A673 (cell line): ENCODE measurements at regions of chr6 and their contacts with region 1.

Region 1: GRCh38 chr6:37169496-37170272 is at the start of gene PIM1:
- DNase-seq: peak; percentile 98
- H3K4me3 ChIP-seq: peak within 1 kb of the TSS; percentile 67
- H3K27ac ChIP-seq: peak within 1 kb of the TSS; percentile 83
- H3K4me1 ChIP-seq: peaks cover 8% of the 10 kb centered on the region
- H3K27me3 ChIP-seq: no peaks in the 10 kb centered on the region
- CTCF ChIP-seq: no peak
- total RNA-seq, gene PIM1: 8.9 and 10.6 TPM in 2 replicates

Region 2: GRCh38 chr6:36885461-36886401 is 284.0 kb before region 1 on chr6 and contains the start of gene C6orf89:
- CTCF ChIA-PET with region 1: no interaction called
- POLR2A ChIA-PET with region 1: no interaction called
- intact Hi-C with region 1: loop called (anchors 10 kb)
- DNase-seq: peak; percentile 99
- H3K4me3 ChIP-seq: peak within 1 kb of the TSS; percentile 72
- H3K27ac ChIP-seq: peak within 1 kb of the TSS; percentile 88
- H3K4me1 ChIP-seq: peaks cover 6% of the 10 kb centered on the region
- H3K27me3 ChIP-seq: no peaks in the 10 kb centered on the region
- CTCF ChIP-seq: peak; percentile 88
- total RNA-seq, gene C6orf89: 22.6 and 27.1 TPM in 2 replicates

Region 3: DNA sequence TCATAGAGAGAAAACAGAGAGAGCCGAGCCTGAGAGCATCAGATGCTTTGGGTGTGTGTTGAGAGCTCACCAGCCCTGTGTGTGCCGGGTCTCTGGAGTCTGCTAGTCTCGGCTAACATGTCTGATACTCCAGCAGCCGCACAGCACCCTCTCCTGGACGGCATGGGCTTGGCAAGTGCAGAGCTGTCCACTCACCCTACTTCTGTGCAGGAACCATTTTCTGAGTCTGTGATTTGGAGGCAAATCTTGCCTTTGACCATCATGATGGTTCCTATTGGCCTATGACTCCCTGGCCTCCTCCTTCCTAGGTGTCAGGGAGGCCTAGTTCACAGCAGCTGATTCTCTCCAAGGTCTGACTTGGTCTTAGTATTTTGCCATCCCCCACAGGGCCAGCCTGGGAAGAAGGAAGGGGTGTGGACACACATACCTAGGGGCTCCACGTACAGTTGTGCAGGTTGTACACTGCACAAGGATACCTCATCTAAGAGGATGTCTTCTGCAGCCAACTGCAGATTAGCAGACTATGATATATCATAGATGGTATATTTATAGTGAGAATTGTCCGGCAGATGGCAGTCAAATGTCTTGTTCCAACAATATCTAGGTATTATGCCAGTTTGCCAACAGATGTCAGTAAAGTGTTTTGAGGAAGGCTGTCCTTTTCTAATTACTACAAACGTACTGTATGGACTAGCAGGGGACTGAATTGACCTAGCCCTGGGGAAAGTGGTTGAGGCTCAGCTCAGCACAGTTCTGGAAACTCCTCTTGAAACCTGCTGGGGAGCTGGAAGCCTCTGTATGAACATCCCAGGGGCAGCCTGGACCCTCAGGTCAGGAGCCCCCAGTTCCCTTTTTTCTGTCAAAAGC is 151.3 kb before region 1 on chr6:
- CTCF ChIA-PET with region 1: interaction called, 17 read pairs
- POLR2A ChIA-PET with region 1: no interaction called
- intact Hi-C with region 1: loop called (anchors 2 kb)
- DNase-seq: peak; percentile 89
- H3K4me3 ChIP-seq: no peak overlapping the region
- H3K27ac ChIP-seq: no peak overlapping the region
- H3K4me1 ChIP-seq: no peaks in the 10 kb centered on the region
- H3K27me3 ChIP-seq: no peaks in the 10 kb centered on the region
- CTCF ChIP-seq: peak; percentile 87

Region 4: GRCh38 chr6:37051138-37052026 is 118.3 kb before region 1 on chr6:
- CTCF ChIA-PET with region 1: interaction called, 38 read pairs
- POLR2A ChIA-PET with region 1: no interaction called
- intact Hi-C with region 1: loop called (anchors 1 kb)
- DNase-seq: peak; percentile 89
- H3K4me3 ChIP-seq: no peak overlapping the region
- H3K27ac ChIP-seq: no peak overlapping the region
- H3K4me1 ChIP-seq: no peaks in the 10 kb centered on the region
- H3K27me3 ChIP-seq: no peaks in the 10 kb centered on the region
- CTCF ChIP-seq: peak; percentile 92

Region 5: GRCh38 chr6:37059344-37060206 is 110.1 kb before region 1 on chr6:
- CTCF ChIA-PET with region 1: interaction called, 5 read pairs
- POLR2A ChIA-PET with region 1: no interaction called
- intact Hi-C with region 1: loop called (anchors 1 kb)
- DNase-seq: peak; percentile 91
- H3K4me3 ChIP-seq: no peak overlapping the region
- H3K27ac ChIP-seq: peak overlapping the region; percentile 79
- H3K4me1 ChIP-seq: peaks cover 14% of the 10 kb centered on the region
- H3K27me3 ChIP-seq: no peaks in the 10 kb centered on the region
- CTCF ChIP-seq: peak; percentile 51

Region 6: GRCh38 chr6:37083243-37084138 is 86.2 kb before region 1 on chr6:
- CTCF ChIA-PET with region 1: no interaction called
- POLR2A ChIA-PET with region 1: interaction called, 12 read pairs
- intact Hi-C with region 1: no loop called
- DNase-seq: peak; percentile 52
- H3K4me3 ChIP-seq: no peak overlapping the region
- H3K27ac ChIP-seq: no peak overlapping the region
- H3K4me1 ChIP-seq: peaks cover 8% of the 10 kb centered on the region
- H3K27me3 ChIP-seq: no peaks in the 10 kb centered on the region
- CTCF ChIP-seq: no peak

Region 7: DNA sequence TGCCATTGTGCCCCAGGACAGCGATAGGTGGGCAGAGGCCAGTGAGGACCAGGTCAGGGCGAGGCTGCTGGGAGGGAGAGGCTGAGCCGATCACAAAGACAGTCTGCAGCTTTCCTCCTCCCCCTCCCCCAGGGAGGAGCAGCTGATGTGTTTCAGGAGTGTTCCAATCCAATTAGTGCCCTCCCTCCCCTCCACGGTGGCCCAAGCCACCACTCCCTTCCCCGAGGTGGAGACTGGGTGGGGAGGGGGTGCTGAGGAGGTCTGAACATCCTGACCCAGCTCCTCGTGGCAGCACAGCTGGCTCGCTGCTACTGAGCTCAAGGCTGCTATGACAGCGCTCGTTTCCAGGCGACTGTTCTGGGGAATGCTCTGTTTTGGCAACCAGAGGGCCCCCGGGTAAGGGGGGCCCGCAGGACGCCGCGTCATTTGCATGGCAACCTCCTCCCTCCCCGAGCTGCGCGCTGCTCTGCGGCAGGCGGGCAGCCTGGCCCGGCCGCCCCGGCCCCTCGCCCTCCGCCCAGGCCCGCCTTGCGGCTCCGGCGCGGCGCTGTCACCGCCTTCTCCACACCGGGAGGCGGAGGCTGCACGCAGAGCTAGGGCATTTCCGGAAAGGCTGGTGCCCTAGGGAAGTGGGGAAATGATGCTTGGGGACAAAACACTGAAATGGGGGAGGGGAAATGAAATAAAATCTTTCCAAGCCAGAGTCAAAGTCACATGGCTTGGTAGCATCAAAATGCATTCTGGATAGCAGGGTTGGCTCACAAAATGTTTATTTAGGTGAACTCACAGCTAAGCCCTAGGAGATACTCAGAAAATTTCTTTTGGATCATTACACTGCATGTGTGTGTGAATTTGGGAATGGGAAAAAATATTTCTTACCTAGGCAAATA is 67.2 kb before region 1 on chr6:
- CTCF ChIA-PET with region 1: interaction called, 3 read pairs
- POLR2A ChIA-PET with region 1: interaction called, 3 read pairs
- intact Hi-C with region 1: loop called (anchors 1 kb)
- DNase-seq: peak; percentile 94
- H3K4me3 ChIP-seq: peak overlapping the region; percentile 45
- H3K27ac ChIP-seq: peak overlapping the region; percentile 79
- H3K4me1 ChIP-seq: peaks cover 28% of the 10 kb centered on the region
- H3K27me3 ChIP-seq: no peaks in the 10 kb centered on the region
- CTCF ChIP-seq: no peak

Region 8: GRCh38 chr6:37137201-37138090 is 32.2 kb before region 1 on chr6:
- CTCF ChIA-PET with region 1: no interaction called
- POLR2A ChIA-PET with region 1: no interaction called
- intact Hi-C with region 1: no loop called
- DNase-seq: peak; percentile 89
- H3K4me3 ChIP-seq: peak overlapping the region; percentile 14
- H3K27ac ChIP-seq: peak overlapping the region; percentile 72
- H3K4me1 ChIP-seq: peaks cover 39% of the 10 kb centered on the region
- H3K27me3 ChIP-seq: no peaks in the 10 kb centered on the region
- CTCF ChIP-seq: no peak